ENCODE measurements at regions of chr18 and their contacts with region 1.

Region 1: DNA sequence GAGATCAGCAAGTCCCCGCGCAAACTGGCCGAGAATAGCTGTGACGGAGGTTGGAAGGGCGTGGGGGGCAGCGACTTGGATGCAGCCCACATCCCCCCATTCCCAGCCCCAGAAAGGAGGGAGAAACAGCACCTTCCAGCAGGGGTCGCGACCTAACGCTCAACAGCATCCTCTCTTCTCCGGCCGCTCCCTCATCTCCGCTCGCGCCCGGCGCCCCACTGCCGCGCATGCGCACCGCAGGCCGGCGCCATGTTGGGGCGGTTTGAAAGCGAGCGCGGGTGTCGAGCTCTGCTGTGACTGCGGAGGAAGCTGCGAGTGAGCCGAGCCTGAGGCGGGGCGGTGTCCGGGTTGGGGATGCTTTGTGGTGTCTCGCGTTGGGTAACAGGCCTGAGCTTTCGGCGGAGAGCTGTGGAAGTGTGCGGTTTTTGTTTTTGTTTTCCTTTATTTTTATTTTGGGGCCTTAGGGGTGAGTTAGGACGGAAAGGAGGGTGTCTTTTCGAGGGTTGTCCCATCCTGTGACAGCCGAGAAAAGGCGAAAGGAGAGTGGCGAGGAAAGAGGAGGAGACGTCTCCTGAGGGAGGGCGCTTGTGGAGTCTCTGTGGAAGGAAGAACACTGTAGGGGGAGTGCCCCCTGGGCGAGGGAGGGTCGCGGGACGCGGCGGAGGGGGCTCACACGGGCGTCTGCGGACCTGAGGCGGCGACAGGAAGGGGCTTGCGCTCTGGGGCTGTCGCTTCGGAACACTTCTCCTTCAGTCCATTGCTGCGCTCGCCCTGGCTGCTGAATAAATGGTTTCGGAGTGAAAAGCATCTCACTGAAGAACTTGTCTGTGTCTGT is at the starts of genes C18orf54 and STARD6:
- DNase-seq: peak; percentile 88 to 93 (median 91)
- H3K4me3 ChIP-seq: peak within 1 kb of the TSS; percentile 87 to 90
- H3K4me3 Mint-ChIP-seq: peak within 1 kb of the TSS; percentile 96 to 100 (median 98)
- H3K27ac ChIP-seq: peak within 1 kb of the TSS; percentile 66
- H3K27ac Mint-ChIP-seq: peak within 1 kb of the TSS; percentile 87 to 97 (median 96)
- H3K4me1 ChIP-seq: peaks cover 12% of the 10 kb centered on the region
- H3K4me1 Mint-ChIP-seq: peaks cover 10 to 20% (median 14%) of the 10 kb centered on the region in 4 donors
- H3K27me3 ChIP-seq: no peaks in the 10 kb centered on the region
- H3K27me3 Mint-ChIP-seq: peaks cover 0 to 1% of the 10 kb centered on the region in 2 donors
- total RNA-seq, gene C18orf54: 3.8 TPM
- total RNA-seq, gene STARD6: not detected

Region 2: GRCh38 chr18:54224379-54225014 is 133.4 kb before region 1 on chr18 and contains the start of gene MBD2:
- CTCF ChIA-PET with region 1: interaction called, 36 read pairs
- POLR2A ChIA-PET with region 1: interaction called, 14 read pairs
- intact Hi-C with region 1: loop called (anchors 1 kb)
- DNase-seq: peak; percentile 92 to 93 (median 93)
- H3K4me3 ChIP-seq: peak within 1 kb of the TSS; percentile 30 to 61
- H3K4me3 Mint-ChIP-seq: peak within 1 kb of the TSS; percentile 92 to 99 (median 92)
- H3K27ac ChIP-seq: peak within 1 kb of the TSS; percentile 52
- H3K27ac Mint-ChIP-seq: peak within 1 kb of the TSS; percentile 95 to 98 (median 97)
- H3K4me1 ChIP-seq: peaks cover 44% of the 10 kb centered on the region
- H3K4me1 Mint-ChIP-seq: peaks cover 28 to 48% (median 39%) of the 10 kb centered on the region in 4 donors
- H3K27me3 ChIP-seq: no peaks in the 10 kb centered on the region
- H3K27me3 Mint-ChIP-seq: no peaks in the 10 kb centered on the region
- total RNA-seq, gene MBD2: 107 to 108 TPM

Region 3: GRCh38 chr18:54269893-54270844 is 87.7 kb before region 1 on chr18:
- CTCF ChIA-PET with region 1: interaction called, 10 read pairs
- POLR2A ChIA-PET with region 1: interaction called, 25 read pairs
- intact Hi-C with region 1: loop called (anchors 1 kb)
- DNase-seq: peak in 4 of 5 donors; percentile 37 to 45 (median 40)
- H3K4me3 ChIP-seq: peak overlapping the region; percentile 70 to 86
- H3K4me3 Mint-ChIP-seq: peak overlapping the region; percentile 90 to 98 (median 93)
- H3K27ac ChIP-seq: peak overlapping the region; percentile 77
- H3K27ac Mint-ChIP-seq: peak overlapping the region; percentile 88 to 100 (median 99)
- H3K4me1 ChIP-seq: peaks cover 18% of the 10 kb centered on the region
- H3K4me1 Mint-ChIP-seq: peaks cover 11 to 35% (median 19%) of the 10 kb centered on the region in 4 donors
- H3K27me3 ChIP-seq: no peaks in the 10 kb centered on the region
- H3K27me3 Mint-ChIP-seq: no peaks in the 10 kb centered on the region

Region 4: GRCh38 chr18:54392543-54393023 is 34.7 kb after region 1 on chr18:
- CTCF ChIA-PET with region 1: interaction called, 26 read pairs
- POLR2A ChIA-PET with region 1: no interaction called
- intact Hi-C with region 1: loop called (anchors 1 kb)
- DNase-seq: peak in 4 of 5 donors; percentile 48 to 51 (median 48)
- H3K4me3 ChIP-seq: no peak overlapping the region
- H3K4me3 Mint-ChIP-seq: no peak overlapping the region
- H3K27ac ChIP-seq: no peak overlapping the region
- H3K27ac Mint-ChIP-seq: no peak overlapping the region
- H3K4me1 ChIP-seq: no peaks in the 10 kb centered on the region
- H3K4me1 Mint-ChIP-seq: peaks cover 0 to 12% (median 4%) of the 10 kb centered on the region in 4 donors
- H3K27me3 ChIP-seq: no peaks in the 10 kb centered on the region
- H3K27me3 Mint-ChIP-seq: peaks cover 2 to 6% of the 10 kb centered on the region in 2 donors

Region 5: GRCh38 chr18:54679318-54680149 is 321.7 kb after region 1 on chr18:
- CTCF ChIA-PET with region 1: no interaction called
- POLR2A ChIA-PET with region 1: no interaction called
- intact Hi-C with region 1: loop called (anchors 10 kb)
- DNase-seq: peak in 4 of 5 donors; percentile 19 to 37 (median 34)
- H3K4me3 ChIP-seq: no peak overlapping the region
- H3K4me3 Mint-ChIP-seq: no peak overlapping the region
- H3K27ac ChIP-seq: no peak overlapping the region
- H3K27ac Mint-ChIP-seq: no peak overlapping the region
- H3K4me1 ChIP-seq: no peaks in the 10 kb centered on the region
- H3K4me1 Mint-ChIP-seq: peaks cover 0 to 1% (median 0%) of the 10 kb centered on the region in 4 donors
- H3K27me3 ChIP-seq: no peaks in the 10 kb centered on the region
- H3K27me3 Mint-ChIP-seq: no peaks in the 10 kb centered on the region

Region 6: DNA sequence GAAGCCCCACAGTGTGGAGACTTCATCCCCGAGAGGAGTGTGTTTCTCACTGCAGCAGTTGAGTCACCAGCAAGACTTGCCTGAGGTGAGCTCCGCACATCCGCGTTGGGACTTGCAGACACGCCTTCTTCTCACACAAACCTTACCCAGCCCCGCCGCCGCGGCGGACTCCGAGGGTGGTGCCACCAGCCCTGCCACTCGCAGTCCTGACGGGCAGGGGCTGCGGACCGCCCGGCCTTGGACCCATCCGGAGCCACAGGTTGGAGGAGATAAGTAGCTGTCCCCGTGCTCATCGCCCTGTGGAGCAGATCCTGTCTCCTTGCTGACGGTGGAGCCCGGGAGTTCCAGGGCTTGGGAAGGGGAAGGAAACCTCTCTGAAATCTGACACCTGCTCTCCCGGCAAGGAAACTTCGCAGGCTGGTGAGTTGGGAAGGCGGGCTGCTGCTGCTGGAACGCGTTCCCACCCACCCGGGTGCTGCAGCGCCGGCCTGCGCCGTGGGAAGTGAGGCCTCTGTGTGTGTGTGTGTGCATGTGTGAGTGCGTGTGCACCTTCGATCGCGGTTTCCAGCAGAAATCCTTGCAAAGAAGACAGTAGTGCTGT is 470.5 kb after region 1 on chr18 and contains the start of gene RAB27B:
- CTCF ChIA-PET with region 1: no interaction called
- POLR2A ChIA-PET with region 1: no interaction called
- intact Hi-C with region 1: loop called (anchors 10 kb)
- DNase-seq: peak; percentile 57 to 82 (median 61)
- H3K4me3 ChIP-seq: peak within 1 kb of the TSS; percentile 68 to 87
- H3K4me3 Mint-ChIP-seq: peak within 1 kb of the TSS; percentile 88 to 96 (median 92)
- H3K27ac ChIP-seq: peak within 1 kb of the TSS; percentile 58
- H3K27ac Mint-ChIP-seq: peak within 1 kb of the TSS; percentile 53 to 91 (median 82)
- H3K4me1 ChIP-seq: peaks cover 15% of the 10 kb centered on the region
- H3K4me1 Mint-ChIP-seq: peaks cover 20 to 39% (median 25%) of the 10 kb centered on the region in 4 donors
- H3K27me3 ChIP-seq: no peaks in the 10 kb centered on the region
- H3K27me3 Mint-ChIP-seq: peaks cover 0 to 2% of the 10 kb centered on the region in 2 donors
- total RNA-seq, gene RAB27B: 2.2 to 3.1 TPM

Measured in CD4-positive, alpha-beta memory T cell (primary cell).